Right ventricle myocardium inferior (tissue), 1 donor: ENCODE measurements at regions of chr15 and their contacts with region 1.

Region 1: GRCh38 chr15:62453981-62454380 is 288.9 kb upstream of the C2CD4B start:
- DNase-seq: no peak
- ATAC-seq: peak; percentile 18

Region 2: DNA sequence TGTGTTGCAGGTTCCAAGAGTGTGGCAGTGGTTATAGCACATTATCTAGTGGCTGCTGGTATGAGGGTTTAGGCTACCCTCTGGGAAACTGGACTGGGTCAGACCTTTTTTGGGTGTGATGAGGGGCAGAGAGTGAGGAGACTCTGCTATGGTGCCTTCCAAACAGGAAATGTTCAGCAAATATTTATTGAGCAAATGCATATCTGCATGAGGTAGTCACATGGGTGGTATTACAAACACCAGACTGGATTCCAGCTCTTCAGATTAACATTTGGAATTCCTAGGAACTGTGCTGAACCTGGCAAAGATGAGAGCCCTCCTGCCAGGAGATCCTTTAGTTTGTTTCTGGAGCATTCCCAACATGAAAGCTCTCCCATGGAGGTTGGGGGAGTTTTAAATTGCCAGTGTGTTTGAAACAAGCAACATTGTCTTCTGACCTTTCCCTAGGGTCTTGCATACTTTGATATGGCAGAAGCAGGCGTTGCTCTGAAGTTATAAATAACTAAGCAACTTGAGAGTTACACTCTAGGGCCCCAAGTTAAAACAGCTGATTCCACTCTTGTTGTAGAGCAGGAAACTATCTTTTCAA is 52.3 kb after region 1 on chr15:
- intact Hi-C with region 1: loop called (anchors 5 kb)
- DNase-seq: no peak
- ATAC-seq: peak; percentile 71

Region 3: DNA sequence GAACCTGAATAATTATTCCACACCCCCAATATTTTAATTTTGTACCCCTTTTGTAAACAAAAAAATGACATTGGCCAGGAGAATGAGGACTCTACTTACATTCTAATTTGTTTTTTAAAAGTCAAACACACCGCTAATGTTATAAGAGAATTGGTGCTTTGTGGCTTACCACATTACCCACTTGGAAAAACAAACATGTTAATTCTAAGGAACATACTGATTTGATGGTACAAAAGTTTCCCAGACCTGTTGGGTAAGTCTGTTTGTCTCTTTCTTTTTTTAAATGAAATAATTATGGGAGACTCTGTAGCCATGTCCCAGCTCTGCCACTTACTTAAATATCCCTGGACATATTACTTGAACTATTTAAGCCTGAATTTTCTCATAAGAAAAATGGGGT is 63.6 kb after region 1 on chr15:
- intact Hi-C with region 1: no loop called
- DNase-seq: no peak
- ATAC-seq: no peak

Region 4: GRCh38 chr15:62649793-62650420 is 195.9 kb after region 1 on chr15:
- intact Hi-C with region 1: loop called (anchors 10 kb)
- DNase-seq: peak; percentile 53
- ATAC-seq: peak; percentile 67